ENCODE measurements at regions of chr1 and their contacts with region 1.

Region 1: DNA sequence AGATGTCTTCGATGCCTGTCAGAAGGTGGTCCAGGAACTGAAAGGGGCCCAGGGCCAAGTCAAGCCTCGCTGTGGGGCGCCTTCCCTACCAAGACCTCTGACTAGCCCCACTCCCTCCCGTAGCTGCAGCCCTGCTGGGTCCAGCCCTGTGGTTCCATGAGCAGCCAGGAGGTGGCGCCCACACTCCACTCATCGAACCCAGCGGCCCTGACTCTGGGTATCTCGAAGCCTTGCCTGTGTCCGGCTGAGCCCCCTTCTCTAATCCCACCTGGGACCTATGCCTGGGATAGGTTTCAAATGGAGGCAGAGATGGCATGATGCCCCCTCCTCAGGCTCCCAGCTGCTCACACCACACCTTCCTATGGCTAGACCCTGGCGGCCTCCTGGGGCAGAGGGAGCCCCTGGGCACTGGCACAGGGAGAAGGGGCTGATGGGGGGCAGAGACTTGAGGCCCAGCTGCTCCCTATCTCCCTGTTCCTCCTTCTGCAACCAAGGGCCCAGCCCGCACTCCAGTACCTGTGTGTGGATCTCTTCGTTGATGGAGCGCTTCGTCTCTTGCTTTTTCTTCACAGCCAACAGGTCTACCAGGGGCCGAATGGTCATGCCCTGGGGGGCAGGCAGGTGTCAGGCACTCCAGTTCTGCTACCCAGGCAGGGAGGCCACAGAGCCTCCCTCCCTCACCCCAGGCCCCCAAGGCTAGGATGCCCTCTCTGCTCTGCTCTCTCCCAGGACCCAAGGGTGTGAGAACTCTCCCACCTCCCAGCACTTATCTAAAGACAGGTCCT is 52.0 kb downstream of the SLC9A1 start:
- DNase-seq: peak; percentile 86
- CTCF ChIP-seq: peak; percentile 100

Region 2: DNA sequence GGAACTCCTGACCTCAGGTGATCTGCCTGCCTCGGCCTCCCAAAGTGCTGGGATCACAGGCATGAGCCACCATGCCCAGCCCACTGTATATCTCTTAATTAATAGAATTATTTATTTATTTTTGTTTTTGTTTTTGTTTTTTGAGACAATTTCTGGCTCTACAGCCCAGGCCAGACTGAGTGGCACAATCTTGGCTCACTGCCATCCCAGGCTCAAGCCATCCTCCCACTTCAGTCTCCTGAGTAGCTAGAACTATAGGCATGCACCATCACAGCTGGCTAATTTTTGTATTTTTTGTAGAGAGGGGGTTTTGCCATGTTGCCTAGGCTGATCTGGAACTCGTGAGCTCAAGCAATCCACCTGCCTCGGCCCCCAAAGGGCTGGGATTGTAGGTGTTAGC is 115.8 kb after region 1 on chr1:
- in situ Hi-C with region 1: loop called (anchors 5 kb)
- DNase-seq: no peak
- CTCF ChIP-seq: no peak

Region 3: DNA sequence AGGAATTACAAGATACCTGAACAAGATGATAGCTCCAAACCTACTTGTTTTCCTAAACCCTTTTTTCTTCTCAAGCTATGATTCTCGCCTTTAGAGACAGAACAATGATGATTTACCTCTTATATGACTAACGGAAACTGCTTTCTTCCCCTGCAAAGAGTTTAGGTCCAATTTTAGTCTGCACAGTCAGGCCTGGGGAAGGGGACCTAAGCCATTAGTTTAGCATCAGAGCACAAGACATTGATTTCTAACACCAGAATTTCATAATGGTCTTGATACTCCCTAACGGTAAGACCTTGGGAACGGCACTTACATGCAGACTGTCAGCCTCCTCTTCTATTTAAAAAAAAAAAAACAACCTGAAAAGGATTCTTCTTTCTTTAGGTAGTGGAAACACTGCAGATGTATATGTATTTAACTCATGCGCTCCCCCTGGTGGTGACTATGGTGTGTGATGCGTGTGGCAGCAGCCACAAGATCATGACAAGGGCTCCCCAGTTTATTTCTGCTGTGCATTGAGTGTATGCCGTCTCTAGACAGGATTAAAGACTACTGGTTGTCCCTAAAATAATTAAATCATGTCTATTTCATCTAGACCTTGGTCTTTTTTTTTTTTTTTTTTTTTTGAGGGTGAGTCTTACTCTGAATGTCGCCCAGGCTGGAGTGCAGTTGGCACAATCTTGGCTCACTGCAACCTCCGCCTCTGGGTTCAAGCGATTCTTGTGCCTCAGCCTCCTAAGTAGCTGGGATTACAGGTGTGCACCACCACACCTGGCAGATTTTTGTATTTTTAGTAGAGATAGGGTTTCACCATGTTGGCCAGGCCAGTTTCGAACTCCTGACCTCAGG is 181.8 kb after region 1 on chr1:
- in situ Hi-C with region 1: loop called (anchors 5 kb)
- DNase-seq: peak; percentile 92
- CTCF ChIP-seq: peak; percentile 80

Measured in GM13977 (cell line).